ENCODE measurements at regions of chr9 and their contacts with region 1.

Region 1: DNA sequence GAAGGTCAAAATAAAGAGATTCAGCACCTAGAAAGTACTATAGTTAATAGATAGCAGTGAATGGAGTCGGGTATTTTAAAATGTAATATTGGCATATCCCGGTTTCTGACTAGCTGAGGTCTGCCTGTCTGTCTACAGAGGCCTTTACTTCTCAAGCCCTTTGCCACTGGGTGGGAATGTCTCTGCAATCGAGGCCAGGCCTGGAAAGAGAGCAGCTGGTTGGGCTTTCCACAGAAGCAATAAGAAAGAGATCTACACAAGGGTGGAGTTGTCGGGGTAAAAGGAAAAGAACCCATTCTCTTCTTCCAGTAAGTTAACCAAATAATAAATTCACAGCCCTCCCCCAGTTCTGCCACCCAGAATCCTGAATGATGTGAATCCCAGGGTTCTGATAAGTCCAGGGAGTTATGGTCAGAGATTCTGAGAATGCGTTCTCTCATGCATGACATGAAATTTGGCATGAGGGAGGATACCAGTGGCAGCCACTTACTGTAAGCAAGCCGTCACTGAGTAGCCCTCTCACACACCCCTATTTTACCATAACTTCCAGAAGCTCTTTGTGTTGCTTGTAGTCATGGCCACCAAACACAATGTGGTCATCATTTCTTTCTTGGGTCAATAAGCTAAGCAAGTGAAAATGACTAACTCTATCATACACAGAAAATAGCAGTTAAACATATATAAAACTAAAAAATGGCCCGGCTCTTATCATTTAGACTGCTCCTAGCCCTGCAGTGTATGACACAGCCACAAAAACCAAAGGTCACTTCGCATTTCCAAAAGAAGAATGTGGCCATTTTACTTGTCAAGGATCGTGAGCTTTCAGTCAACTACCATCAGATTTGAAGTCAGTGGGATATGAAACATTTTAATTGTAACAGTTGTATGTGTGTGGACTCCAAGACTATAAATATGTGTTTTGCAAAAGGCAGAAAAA is 185.0 kb downstream of the GLIS3 start:
- DNase-seq: no peak
- H3K4me3 ChIP-seq: no peak overlapping the region
- H3K27me3 ChIP-seq: no peaks in the 10 kb centered on the region
- CTCF ChIP-seq: no peak

Region 2: GRCh38 chr9:4126180-4126865 is 11.5 kb after region 1 on chr9:
- CTCF ChIA-PET with region 1: interaction called, 10 read pairs
- POLR2A ChIA-PET with region 1: interaction called, 5 read pairs
- DNase-seq: peak; percentile 59
- H3K4me3 ChIP-seq: no peak overlapping the region
- H3K27me3 ChIP-seq: no peaks in the 10 kb centered on the region
- CTCF ChIP-seq: no peak